Activated CD8-positive, alpha-beta memory T cell treated with anti-CD3 and anti-CD28 coated beads, Interleukin-2, amount 10 ng/mL, durations not matched to agents 7 days and 5 days (primary cell): ENCODE measurements at regions of chr11 and their contacts with region 1.

Region 1: DNA sequence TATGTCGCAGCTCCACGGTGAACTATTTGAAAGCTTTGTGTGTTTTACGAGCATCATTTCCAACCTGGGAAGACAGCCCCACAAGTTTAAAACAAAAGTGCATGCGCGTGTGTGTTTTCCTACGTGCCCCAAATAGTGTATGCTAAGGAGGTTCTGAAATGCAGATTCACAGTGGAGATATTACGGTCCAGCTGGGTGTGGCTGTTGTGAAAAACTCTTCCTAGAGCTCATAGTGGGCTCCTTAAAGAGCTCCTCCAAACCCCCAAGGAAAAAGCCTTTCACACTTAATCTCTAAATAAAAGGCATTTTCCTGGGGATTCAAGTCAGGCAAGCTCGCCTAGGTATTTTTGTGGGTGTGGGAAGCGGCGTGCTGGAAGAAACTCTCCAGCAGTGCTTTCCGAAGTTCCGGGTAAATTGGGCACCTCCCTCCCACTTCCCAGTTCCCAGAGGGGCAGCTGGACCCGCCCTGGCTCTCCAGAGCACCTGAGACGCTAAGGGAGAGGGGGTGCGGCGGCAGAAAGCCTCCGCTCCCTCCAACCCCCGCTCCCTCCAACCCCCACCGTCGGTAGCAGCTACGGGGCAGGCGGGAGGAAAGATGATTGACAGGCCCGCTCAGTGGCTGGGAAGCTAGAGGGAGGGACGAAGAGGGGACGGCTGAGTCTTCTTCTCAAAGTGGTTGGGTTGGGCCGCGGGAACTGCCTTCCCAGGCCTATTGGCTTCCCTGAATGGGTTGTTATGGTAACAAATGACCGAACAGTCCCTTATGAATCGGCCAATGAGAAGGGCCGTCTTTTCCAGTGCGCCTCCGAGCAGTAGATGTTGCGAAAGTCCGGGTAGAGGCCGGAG is 558 bp upstream of the PCF11 start:
- DNase-seq: peak; percentile 99
- ATAC-seq: peak; percentile 89
- H3K4me3 Mint-ChIP-seq: peak overlapping the region; percentile 100
- H3K27ac Mint-ChIP-seq: peak overlapping the region; percentile 99
- H3K4me1 Mint-ChIP-seq: peaks cover 32% of the 10 kb centered on the region
- H3K27me3 Mint-ChIP-seq: no peaks in the 10 kb centered on the region

Region 2: GRCh38 chr11:83025267-83025720 is 131.1 kb before region 1 on chr11:
- CTCF ChIA-PET with region 1: no interaction called
- DNase-seq: no peak
- ATAC-seq: no peak
- H3K4me3 Mint-ChIP-seq: no peak overlapping the region
- H3K27ac Mint-ChIP-seq: no peak overlapping the region
- H3K4me1 Mint-ChIP-seq: peaks cover 16% of the 10 kb centered on the region
- H3K27me3 Mint-ChIP-seq: no peaks in the 10 kb centered on the region

Region 3: GRCh38 chr11:83116015-83116641 is 40.2 kb before region 1 on chr11:
- CTCF ChIA-PET with region 1: interaction called, 11 read pairs
- DNase-seq: no peak
- ATAC-seq: no peak
- H3K4me3 Mint-ChIP-seq: peak overlapping the region; percentile 80
- H3K27ac Mint-ChIP-seq: peak overlapping the region; percentile 93
- H3K4me1 Mint-ChIP-seq: peaks cover 41% of the 10 kb centered on the region
- H3K27me3 Mint-ChIP-seq: no peaks in the 10 kb centered on the region

Region 4: DNA sequence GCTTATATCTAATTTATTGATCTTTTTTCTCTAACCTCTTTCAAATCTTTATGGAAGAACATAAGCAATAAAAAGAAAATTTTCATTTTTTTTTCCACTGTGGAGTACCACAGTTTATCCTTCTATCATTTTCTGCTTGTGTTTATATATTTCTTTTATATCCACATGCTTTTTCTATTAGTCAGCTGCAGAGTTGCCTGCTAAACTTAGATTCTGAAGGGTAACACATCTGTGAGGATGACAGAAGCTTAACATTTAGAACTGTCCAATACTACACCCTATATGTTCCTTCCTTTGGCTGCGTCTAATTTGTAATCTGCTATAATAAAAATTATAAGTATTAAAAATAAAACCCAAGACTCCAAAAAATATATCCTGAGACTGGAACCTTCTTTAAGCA is 109.0 kb after region 1 on chr11:
- CTCF ChIA-PET with region 1: no interaction called
- DNase-seq: no peak
- ATAC-seq: no peak
- H3K4me3 Mint-ChIP-seq: no peak overlapping the region
- H3K27ac Mint-ChIP-seq: no peak overlapping the region
- H3K4me1 Mint-ChIP-seq: no peaks in the 10 kb centered on the region
- H3K27me3 Mint-ChIP-seq: no peaks in the 10 kb centered on the region